PC-3 (cell line): ENCODE measurements at regions of chr17 and their contacts with region 1.

Region 1: DNA sequence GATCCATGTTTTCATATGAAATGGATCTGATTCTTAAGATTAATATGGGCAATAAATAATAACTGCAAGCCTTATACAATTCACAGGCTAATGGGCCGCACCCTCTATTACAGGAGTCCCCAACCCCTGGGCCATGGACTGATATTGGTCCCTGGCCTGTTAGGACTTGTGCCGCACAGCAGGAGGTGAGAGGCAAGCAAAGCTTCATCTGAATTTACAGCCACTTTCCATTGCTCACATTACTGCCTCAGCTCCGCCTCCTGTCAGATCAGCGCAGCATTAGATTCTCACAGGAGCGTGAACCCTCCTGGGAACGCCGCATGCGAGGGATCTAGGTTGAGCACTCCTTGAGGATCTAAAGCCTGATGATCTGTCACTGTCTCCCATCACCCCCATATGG is 26.8 kb downstream of the METTL16 start:
- DNase-seq: no peak
- ATAC-seq: no peak
- H3K4me3 ChIP-seq: no peak overlapping the region
- H3K27ac ChIP-seq: no peak overlapping the region
- H3K4me1 ChIP-seq: peaks cover 14% of the 10 kb centered on the region
- H3K27me3 ChIP-seq: no peaks in the 10 kb centered on the region
- CTCF ChIP-seq: no peak

Region 2: DNA sequence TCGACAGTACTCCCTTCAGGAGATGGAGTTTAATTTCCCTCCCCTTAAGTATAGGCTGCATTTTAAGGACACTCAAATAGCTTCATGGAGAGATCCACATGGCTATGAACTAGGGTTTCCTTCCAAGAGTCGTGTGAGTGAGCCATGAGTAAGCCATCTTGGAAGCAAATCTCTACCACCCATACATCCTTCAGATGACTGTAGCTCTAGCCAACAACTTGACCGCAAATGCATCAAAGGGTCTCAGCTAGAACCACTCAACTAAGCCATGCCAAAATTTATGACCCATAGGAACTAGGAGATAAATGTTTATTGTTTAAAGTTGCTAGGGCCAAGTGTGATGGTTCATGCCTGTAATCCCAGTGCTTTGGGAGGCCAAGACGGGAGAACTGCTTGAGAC is 16.6 kb before region 1 on chr17:
- CTCF ChIA-PET with region 1: no interaction called
- POLR2A ChIA-PET with region 1: interaction called, 11 read pairs
- intact Hi-C with region 1: no loop called
- DNase-seq: peak; percentile 2
- ATAC-seq: no peak
- H3K4me3 ChIP-seq: no peak overlapping the region
- H3K27ac ChIP-seq: no peak overlapping the region
- H3K4me1 ChIP-seq: no peaks in the 10 kb centered on the region
- H3K27me3 ChIP-seq: no peaks in the 10 kb centered on the region
- CTCF ChIP-seq: no peak